Activated naive CD8-positive, alpha-beta T cell treated with anti-CD3 and anti-CD28 coated beads, Interleukin-2, amount 10 ng/mL, durations not matched to agents 7 days and 5 days (primary cell): ENCODE measurements at regions of chr22 and their contacts with region 1.

Region 1: DNA sequence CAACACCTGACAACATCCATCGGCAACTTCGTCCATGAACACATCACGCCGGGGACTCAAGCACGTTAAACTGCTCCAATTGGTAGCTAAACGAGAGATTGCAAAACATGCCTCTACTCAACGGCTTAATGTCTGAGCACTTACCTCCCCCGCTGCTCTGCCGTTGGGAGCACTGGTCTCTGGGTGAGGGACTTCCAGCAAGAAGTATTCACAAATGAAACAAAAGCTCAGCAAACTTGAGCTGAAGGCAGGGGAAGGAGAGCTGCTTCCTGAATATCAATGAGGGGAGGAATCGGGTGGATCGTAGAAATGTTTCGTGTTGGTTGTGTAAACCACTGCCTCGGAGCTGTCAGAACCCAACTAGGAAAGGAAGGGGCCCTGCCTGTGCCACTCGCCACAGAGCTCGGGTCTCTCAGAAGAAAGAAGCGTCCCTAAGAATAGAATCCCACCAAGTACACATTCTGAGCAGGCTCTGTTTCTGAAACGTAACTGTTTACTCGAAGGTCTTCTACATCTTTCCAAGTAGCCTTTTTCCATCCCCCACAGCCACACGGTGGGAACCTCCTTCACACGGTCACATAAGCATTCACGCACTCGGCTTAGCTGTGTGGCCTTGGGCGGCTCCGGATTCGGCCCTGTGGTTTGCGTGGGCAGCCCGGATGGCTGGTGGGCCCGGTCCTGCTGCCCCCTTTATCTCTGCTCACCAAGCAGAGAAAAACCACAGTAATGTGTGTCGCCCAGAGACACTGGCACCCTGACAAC is at the start of gene MLC1:
- DNase-seq: peak; percentile 52
- ATAC-seq: no peak
- H3K4me3 Mint-ChIP-seq: no peak within 1 kb of the TSS
- H3K27ac Mint-ChIP-seq: no peak within 1 kb of the TSS
- H3K4me1 Mint-ChIP-seq: peaks cover 7% of the 10 kb centered on the region
- H3K27me3 Mint-ChIP-seq: peaks cover 4% of the 10 kb centered on the region
- total RNA-seq, gene MLC1: 4.2 to 4.9 TPM

Region 2: DNA sequence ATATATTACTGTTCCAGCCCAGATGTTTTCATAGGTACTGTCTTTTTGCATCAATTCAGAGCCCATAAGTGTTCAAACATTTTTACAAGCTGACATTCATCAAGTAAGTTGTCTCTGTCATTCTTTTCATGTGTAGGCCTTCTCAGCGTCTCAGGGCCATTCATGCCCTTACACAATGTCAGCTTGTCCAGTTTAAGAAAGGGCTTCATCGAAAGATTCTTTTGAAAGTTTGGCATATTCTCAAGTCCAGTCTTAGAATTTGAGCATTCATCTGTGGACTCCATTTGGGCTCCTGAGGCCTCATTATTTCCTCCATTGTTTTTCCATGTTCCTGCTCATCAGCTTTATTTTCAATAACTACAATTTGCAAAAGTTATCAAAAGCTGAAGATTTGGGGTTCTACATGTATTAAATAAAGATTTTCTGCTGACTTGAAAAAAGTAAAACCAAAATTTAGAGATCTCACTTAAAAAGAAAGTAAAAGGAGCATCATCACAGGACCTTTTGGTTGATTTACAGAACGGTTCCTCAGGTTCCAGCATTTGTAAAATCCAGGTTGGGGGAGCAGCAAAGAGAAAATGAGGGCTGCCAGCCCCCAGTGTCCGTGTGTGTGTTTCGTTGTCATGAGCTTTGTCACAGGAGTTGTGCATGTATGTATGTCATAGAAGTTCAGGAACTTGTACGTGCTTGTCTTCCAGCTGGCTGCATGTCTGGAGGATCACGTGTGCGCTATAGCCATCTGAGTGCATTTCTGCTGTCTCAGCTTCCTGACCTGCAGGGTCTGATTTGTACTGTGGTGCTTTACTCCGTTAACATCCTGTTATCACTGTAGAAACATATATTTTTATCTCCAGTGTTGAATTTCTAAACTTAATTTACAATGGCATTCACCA is 20.1 kb after region 1 on chr22:
- POLR2A ChIA-PET with region 1: interaction called, 16 read pairs
- DNase-seq: peak; percentile 55
- ATAC-seq: peak; percentile 93
- H3K4me3 Mint-ChIP-seq: peak overlapping the region; percentile 82
- H3K27ac Mint-ChIP-seq: peak overlapping the region; percentile 90
- H3K4me1 Mint-ChIP-seq: peaks cover 27% of the 10 kb centered on the region
- H3K27me3 Mint-ChIP-seq: peaks cover 2% of the 10 kb centered on the region

Region 3: DNA sequence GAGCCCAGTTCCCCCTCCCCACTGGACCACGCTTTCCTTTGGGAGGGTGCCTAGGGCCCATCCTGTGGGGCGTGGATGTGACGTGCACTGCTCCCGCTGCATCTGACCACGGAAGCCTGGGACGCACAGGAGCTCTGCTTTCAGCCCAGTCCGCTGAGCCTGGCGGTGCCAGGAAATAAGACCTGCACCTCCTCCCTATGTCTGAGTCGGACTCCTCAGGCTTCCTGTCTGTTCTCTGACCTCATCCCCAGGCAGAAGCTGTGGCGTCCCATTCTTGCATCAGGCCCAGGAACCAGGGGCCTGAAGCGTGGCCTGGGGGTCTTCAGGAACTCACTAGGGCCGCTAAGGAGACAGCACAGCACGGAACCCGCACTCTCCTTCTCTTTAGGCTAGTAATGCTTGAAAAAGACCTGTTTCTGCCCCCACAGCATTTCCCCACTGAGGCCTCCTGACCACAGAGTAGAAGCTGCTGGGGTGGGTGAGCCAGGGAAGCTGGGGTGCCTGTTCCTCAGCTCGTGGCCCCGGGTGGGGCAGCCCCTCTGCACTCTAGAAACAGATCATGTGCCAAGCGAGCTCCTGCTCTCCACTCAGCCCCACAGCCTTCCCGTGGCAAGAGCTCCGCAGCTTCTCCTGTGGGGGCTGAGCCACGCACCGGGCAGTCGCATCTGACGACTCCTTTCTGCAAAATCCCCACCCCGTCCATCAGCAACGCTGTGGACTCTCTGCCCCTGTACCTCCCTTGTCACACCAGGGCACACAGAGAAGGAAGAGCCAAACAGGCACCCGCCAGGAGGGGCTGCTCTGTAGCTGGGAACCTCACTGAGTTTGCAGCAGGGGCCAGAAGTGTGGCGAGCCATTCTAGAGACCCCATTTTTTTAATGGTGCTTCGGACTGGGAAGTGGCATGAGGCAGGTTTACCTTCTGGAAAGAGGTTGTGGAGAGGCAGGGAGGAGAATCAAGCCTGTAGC is 27.0 kb after region 1 on chr22:
- POLR2A ChIA-PET with region 1: interaction called, 31 read pairs
- DNase-seq: peak; percentile 65
- ATAC-seq: peak; percentile 85
- H3K4me3 Mint-ChIP-seq: peak overlapping the region; percentile 66
- H3K27ac Mint-ChIP-seq: peak overlapping the region; percentile 92
- H3K4me1 Mint-ChIP-seq: peaks cover 22% of the 10 kb centered on the region
- H3K27me3 Mint-ChIP-seq: no peaks in the 10 kb centered on the region